Activated naive CD4-positive, alpha-beta T cell treated with anti-CD3 and anti-CD28 coated beads for 36 hours (primary cell): ENCODE measurements at regions of chr7 and their contacts with region 1.

Region 1: DNA sequence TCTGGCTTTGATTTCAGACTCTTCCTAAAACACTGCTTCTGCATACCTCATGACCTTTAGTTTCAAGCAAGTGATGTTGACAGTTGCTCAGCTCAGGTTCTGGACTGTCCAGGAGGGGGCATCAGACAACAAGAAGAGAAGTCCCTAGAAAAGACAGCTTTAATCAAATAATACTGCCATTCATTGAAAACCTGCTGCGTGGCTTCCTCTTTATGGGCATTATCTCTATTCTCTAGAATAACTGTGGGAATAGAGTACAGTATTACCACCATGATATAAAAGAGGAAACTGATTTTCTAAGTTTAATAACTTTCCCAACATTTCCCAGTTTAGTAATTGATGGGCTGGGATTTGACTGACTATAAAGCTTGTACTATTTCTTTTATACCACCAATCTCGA is 170.4 kb downstream of the SNX13 start:
- DNase-seq: peak; percentile 78
- H3K4me3 Mint-ChIP-seq: no peak overlapping the region
- H3K27ac Mint-ChIP-seq: no peak overlapping the region
- H3K4me1 Mint-ChIP-seq: peaks cover 9% of the 10 kb centered on the region
- H3K27me3 Mint-ChIP-seq: no peaks in the 10 kb centered on the region

Region 2: GRCh38 chr7:17680943-17681351 is 89.0 kb before region 1 on chr7:
- CTCF ChIA-PET with region 1: interaction called, 4 read pairs
- intact Hi-C with region 1: loop called (anchors 5 kb)
- DNase-seq: no peak
- H3K4me3 Mint-ChIP-seq: no peak overlapping the region
- H3K27ac Mint-ChIP-seq: peak overlapping the region; percentile 9
- H3K4me1 Mint-ChIP-seq: no peaks in the 10 kb centered on the region
- H3K27me3 Mint-ChIP-seq: no peaks in the 10 kb centered on the region

Region 3: GRCh38 chr7:17706734-17707133 is 63.2 kb before region 1 on chr7:
- CTCF ChIA-PET with region 1: interaction called, 9 read pairs
- intact Hi-C with region 1: loop called (anchors 2 kb)
- DNase-seq: peak; percentile 61
- H3K4me3 Mint-ChIP-seq: no peak overlapping the region
- H3K27ac Mint-ChIP-seq: no peak overlapping the region
- H3K4me1 Mint-ChIP-seq: no peaks in the 10 kb centered on the region
- H3K27me3 Mint-ChIP-seq: no peaks in the 10 kb centered on the region

Region 4: GRCh38 chr7:17940302-17940883 is 170.5 kb after region 1 on chr7 and contains the start of gene SNX13:
- CTCF ChIA-PET with region 1: no interaction called
- intact Hi-C with region 1: loop called (anchors 1 kb)
- DNase-seq: peak; percentile 91
- H3K4me3 Mint-ChIP-seq: peak within 1 kb of the TSS; percentile 99
- H3K27ac Mint-ChIP-seq: peak within 1 kb of the TSS; percentile 92
- H3K4me1 Mint-ChIP-seq: peaks cover 41% of the 10 kb centered on the region
- H3K27me3 Mint-ChIP-seq: no peaks in the 10 kb centered on the region
- total RNA-seq, gene SNX13: 19.5 to 20.3 TPM

Region 5: DNA sequence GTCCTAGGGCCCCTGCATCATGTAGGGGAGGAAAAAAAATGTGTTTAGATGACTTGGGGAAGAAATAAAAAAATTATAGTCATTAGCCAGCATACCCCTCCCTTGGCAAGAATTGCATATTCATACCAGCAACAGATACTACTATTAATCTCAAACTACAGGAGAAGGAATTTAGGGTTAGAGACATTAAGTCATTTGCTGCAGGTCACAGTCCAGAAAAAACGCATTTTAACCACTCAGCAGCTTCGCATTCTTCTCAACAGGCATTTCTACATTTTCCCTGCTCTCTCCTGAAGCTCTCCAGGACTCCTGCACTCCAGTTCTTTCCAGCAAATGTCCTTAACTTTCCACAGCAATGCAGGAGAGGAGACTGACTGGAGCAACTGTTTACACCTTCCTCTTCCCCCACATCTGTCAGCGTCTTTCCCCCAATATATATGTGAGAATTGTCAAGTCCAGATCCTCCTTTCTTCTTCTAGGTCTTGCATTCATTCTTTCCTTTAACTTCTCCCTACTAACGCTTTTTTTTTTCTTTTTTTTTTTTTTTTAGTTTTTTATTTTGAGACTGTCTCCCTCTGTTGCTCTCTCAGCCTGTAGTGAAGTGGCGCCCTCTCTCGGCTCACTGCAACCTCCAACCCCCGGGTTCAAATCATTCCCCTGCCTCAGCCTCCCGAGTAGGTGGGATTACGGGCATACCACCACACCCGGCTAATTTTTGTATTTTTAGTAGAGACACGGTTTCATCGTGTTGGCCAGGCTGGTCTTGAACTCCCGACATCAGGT is 222.1 kb after region 1 on chr7:
- CTCF ChIA-PET with region 1: interaction called, 18 read pairs
- intact Hi-C with region 1: loop called (anchors 1 kb)
- DNase-seq: peak; percentile 58
- H3K4me3 Mint-ChIP-seq: no peak overlapping the region
- H3K27ac Mint-ChIP-seq: no peak overlapping the region
- H3K4me1 Mint-ChIP-seq: peaks cover 2% of the 10 kb centered on the region
- H3K27me3 Mint-ChIP-seq: peaks cover 6% of the 10 kb centered on the region

Region 6: DNA sequence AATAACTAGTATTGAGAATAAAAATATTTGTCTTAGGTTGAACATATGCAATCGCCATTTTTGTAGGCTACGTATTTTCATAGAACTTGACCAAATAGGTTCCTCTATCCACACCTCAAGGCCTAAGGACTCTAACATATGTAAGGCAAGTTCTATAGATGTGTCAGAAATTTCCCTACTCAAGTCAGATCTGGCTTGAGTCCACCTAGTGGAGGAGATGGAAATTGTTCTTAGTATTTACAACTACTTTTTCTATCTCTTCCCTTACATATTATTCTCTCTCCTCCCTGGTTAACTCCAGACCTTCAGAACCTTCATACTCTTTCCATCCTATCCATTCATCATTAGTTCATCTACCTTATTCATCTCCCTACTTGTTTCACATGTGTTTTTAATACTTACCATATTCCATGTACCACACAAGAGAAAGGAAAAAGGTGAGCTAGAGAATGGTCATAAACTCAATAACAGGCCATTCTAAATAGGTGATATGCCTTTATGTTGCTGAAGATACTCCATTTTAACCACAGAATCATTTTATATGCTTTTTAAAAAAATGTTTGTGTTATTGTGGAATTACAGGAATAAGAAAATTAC is 551.2 kb after region 1 on chr7:
- CTCF ChIA-PET with region 1: interaction called, 7 read pairs
- intact Hi-C with region 1: loop called (anchors 1 kb)
- DNase-seq: no peak
- H3K4me3 Mint-ChIP-seq: no peak overlapping the region
- H3K27ac Mint-ChIP-seq: no peak overlapping the region
- H3K4me1 Mint-ChIP-seq: no peaks in the 10 kb centered on the region
- H3K27me3 Mint-ChIP-seq: peaks cover 3% of the 10 kb centered on the region

Region 7: DNA sequence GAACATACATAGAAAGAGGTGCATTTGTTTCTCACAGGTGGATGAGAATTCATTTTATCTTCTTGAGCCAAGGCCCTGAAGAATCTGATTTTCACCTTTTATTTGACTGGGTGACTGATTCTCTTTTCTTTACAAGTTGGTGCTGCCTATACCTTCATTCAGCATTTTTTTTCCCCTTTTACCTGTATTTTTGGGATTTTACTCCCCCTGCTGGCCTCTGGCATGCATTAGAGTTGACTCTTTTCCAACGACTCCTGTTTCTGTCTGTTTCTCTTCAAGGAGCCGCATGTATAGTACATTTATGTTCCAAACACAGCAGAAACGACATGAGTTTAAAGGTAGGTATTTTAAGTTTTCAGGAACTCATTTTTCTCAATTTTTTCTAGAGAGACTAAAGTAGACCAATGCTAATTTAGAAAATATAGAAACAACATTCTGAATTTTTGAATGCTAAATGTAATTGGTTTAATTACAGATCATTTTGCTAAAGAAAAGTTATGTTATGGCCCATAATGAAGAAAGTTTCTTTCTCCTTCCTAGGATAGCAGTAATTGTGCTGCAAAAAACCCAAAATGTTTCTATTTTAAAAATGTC is 575.8 kb after region 1 on chr7:
- CTCF ChIA-PET with region 1: interaction called, 11 read pairs
- intact Hi-C with region 1: loop called (anchors 1 kb)
- DNase-seq: peak; percentile 44
- H3K4me3 Mint-ChIP-seq: no peak overlapping the region
- H3K27ac Mint-ChIP-seq: no peak overlapping the region
- H3K4me1 Mint-ChIP-seq: no peaks in the 10 kb centered on the region
- H3K27me3 Mint-ChIP-seq: peaks cover 11% of the 10 kb centered on the region